ENCODE measurements at regions of chr1 and their contacts with region 1.

Region 1: GRCh38 chr1:225977937-225978748 is 21.0 kb downstream of the SDE2 start:
- DNase-seq: no peak
- ATAC-seq: no peak

Region 2: GRCh38 chr1:225319871-225320270 is 658.3 kb before region 1 on chr1:
- intact Hi-C with region 1: loop called (anchors 2 kb)
- DNase-seq: no peak
- ATAC-seq: no peak

Region 3: GRCh38 chr1:225474986-225475820 is 502.9 kb before region 1 on chr1:
- intact Hi-C with region 1: loop called (anchors 1 kb)
- DNase-seq: peak; percentile 91
- ATAC-seq: peak; percentile 90

Region 4: DNA sequence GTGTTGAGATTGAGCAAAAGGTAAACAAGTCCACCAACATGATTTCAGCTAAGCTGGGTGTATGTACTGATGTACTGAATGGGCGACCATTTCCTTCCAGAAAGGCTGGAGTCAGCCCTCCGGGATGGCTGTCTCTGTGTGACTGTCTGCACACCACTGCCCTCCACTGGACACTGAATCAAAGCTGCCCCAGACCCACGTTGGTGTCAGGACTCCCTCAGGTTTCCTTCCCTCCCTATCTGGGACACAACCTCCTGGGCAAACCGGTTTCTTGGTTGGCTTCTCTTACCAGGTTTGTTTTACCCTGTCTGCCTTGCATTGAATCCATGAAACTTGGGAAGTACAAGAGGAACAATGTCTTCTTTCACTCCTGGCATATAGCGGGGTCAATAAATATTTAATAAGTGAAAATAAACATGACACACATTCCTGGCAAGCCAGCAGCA is 205.8 kb before region 1 on chr1:
- intact Hi-C with region 1: loop called (anchors 5 kb)
- DNase-seq: peak; percentile 77
- ATAC-seq: peak; percentile 88

Region 5: DNA sequence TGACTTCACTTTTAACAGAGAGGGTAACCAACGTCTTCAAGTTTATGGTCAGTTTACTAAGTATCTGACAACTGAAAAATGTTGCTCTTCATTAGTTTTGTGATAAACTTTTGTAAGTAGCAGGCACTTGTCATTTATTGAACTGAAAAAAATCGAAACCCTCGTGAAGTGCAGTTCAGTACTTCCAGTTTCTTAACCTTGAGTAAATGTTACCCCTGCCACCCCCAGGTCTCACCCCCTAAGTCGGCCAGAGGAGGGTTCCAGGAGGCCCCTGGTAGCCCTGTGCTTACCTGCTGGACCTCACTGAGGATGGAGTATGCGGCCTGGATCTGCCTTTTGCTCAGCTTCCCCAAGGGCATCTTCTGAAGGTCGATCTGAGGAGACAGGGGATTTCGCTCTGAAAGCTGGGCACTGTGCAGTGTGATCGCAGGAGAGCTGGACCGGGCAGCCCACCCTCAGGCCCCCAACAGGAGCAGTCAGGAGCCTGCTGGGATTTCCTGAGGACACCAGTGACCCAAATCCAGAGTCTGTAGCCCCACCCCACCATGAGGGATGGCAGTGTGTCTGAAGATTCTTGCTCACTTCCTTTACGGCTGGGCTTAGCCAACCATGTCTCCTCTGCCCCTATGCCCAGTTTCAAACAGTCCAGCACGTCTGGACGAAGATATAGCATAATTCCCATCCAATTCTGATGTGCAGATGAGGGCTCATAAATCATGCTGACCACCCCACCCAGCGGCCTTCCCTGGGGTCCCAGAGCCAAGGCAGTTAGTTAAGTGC is 392.2 kb after region 1 on chr1:
- intact Hi-C with region 1: no loop called
- DNase-seq: no peak
- ATAC-seq: no peak